Activated CD8-positive, alpha-beta memory T cell treated with anti-CD3 and anti-CD28 coated beads, Interleukin-2, amount 10 ng/mL, durations not matched to agents 7 days and 5 days (primary cell): ENCODE measurements at regions of chr9 and their contacts with region 1.

Region 1: GRCh38 chr9:74952281-74953151 is at the start of gene C9orf40:
- DNase-seq: peak; percentile 94
- ATAC-seq: peak; percentile 93
- H3K4me3 Mint-ChIP-seq: peak within 1 kb of the TSS; percentile 98
- H3K27ac Mint-ChIP-seq: peak within 1 kb of the TSS; percentile 97
- H3K4me1 Mint-ChIP-seq: peaks cover 45% of the 10 kb centered on the region
- H3K27me3 Mint-ChIP-seq: no peaks in the 10 kb centered on the region
- total RNA-seq, gene C9orf40: 19.0 to 25.5 TPM

Region 2: DNA sequence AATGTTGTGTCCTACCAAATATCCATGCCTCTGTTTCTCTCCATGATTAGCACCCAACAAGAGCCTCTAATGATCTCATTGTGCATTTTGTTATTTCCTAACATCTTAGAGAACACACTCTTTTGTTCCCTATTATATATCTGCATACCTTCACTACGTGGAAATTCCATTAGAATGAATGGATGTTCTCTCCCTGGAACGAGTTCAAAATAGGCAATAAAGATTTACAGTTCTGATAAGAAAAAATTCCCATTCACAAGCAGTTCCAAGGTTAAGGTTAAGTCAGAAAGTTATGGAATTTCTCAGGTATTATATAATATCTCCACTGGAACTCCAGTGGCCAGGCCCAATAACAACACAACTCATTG is 148.5 kb before region 1 on chr9:
- CTCF ChIA-PET with region 1: no interaction called
- DNase-seq: no peak
- ATAC-seq: no peak
- H3K4me3 Mint-ChIP-seq: no peak overlapping the region
- H3K27ac Mint-ChIP-seq: no peak overlapping the region
- H3K4me1 Mint-ChIP-seq: no peaks in the 10 kb centered on the region
- H3K27me3 Mint-ChIP-seq: peaks cover 28% of the 10 kb centered on the region

Region 3: GRCh38 chr9:75071530-75072124 is 119.1 kb after region 1 on chr9:
- CTCF ChIA-PET with region 1: interaction called, 11 read pairs
- DNase-seq: peak; percentile 66
- ATAC-seq: peak; percentile 78
- H3K4me3 Mint-ChIP-seq: no peak overlapping the region
- H3K27ac Mint-ChIP-seq: peak overlapping the region; percentile 66
- H3K4me1 Mint-ChIP-seq: peaks cover 18% of the 10 kb centered on the region
- H3K27me3 Mint-ChIP-seq: no peaks in the 10 kb centered on the region